ENCODE measurements at regions of chr7 and their contacts with region 1.

Region 1: DNA sequence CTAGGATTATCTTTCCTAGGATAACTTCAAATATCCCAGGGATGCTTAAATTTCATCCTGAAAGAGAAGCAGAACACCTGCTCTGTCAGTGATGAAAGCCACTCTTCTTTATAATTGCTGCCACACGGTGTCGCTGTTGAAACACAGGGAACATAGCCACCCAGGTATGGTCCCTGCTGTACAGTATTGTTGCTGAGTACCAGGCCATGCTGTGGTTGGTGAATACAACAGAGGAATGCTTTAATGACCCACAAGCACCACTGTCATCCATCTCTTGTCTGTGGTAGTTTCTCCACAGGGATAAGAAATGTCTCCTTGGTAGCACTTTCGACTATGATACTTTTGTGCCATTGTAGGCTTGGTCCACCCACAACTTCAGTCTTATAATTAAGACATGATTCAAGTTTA is 70.6 kb upstream of the STARD3NL start:
- DNase-seq: peak; percentile 74
- ATAC-seq: peak; percentile 81

Region 2: DNA sequence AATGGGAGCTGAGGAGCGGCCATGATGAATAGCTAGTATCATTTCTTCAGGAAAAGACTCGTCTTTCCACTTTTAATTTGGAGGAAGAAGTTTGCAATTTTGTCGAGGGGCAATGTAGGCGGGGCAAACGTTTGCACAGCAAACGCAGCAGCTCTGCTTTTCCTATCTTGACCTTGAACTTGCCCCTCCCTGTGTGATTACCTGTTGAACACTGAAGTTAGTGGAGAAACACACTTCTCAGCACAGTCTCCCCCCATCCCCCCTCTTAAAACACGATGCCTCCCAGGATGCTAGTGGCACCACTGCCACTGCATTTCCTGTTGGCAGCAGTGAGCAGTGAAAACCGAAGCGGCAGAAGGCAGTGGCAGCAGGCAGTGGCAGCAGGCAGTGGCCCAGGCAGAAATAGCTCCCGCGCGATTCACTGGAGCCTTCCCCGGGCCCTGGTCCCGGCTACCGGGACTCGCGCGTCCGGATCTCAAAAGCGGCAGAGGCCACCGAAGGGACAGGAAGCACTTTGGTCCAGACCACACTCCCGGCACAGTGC is 187.1 kb before region 1 on chr7 and contains the start of gene EPDR1:
- intact Hi-C with region 1: loop called (anchors 10 kb)
- DNase-seq: peak; percentile 79
- ATAC-seq: no peak
- total RNA-seq, gene EPDR1: 46.9 TPM

Region 3: DNA sequence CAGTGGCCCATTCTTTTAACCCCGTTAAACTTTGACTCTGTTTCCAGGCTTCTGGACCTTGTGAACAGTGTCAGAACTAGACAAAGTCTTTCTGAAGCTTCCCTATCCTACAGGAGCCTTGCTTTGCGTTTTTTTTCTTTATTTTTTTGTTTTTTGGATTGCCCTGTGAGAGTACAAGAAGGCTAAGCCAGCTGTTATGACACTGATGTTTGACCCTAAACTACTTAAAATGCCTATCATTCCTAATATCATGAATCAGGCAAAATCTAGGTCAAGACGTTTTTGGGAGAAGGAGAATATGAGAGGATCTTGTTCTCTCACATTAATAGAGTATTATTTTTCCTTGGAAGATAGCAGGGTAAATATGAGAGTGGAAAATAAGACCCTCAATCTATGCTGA is 107.2 kb before region 1 on chr7:
- intact Hi-C with region 1: no loop called
- DNase-seq: no peak
- ATAC-seq: peak; percentile 91

Region 4: DNA sequence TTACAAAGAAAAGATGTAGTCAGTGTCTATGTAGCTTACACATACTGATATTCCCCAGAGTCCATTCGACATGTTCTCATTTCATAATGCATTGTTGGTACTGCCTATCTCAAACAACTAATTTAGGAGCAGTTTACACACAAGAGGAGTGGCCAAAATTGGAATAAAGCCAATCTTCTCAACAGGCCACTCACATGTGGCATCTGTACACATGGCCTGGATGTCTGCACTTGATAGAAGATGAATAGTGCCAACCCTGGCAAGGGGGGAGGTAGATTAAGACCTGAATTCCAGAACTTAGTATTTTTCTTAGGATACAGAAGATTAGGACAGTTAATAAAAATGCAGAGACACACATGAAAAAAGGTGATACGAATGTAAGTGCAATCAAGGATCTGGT is 54.7 kb before region 1 on chr7:
- intact Hi-C with region 1: no loop called
- DNase-seq: no peak
- ATAC-seq: no peak

Region 5: DNA sequence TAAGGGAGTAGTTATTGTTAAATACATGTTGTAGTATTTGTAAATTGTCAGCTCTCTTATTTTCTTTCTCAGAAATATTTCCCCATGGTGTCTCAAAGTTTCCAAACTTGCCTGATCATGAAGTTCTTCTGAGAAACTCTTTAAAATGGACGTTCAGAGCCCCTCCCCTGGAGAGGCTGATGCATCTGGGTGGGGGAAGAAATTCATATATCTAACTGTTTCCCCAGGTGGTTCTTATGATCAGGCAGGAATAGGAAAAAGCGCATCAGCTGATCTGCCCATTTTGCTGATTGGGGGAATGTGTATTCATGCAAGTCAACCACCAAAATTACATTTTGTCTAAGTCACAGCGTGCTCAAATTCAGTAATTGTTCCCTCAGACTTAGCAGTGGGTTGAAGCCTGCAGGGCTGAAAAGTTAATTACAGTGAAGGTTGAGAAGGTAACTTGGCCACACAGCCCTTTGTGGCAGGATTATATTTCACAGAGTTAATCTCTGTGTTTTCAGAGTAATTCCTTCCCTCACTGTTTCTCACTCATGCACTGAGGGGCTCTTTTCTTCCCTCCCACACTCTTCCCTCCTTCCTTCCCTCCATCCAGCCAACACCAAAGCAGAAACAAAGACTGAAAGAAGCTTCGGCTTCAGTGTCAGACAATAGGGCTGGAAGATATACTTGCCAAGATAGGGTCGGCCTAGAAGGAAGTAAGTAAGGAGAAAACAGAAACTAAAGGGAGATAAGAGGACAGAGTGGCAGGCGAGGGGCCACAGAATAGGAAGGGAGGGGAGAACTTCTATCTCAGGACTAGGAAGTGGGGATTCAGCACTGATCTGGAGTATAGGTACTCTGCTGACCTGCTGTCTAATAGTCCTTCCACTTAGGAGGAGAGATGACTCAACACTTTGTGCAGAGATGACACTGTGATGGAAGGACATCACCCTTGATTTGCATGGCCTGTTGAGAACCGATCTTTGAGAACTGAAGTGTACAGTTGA is 20.0 kb after region 1 on chr7:
- intact Hi-C with region 1: no loop called
- DNase-seq: no peak
- ATAC-seq: no peak

Region 6: DNA sequence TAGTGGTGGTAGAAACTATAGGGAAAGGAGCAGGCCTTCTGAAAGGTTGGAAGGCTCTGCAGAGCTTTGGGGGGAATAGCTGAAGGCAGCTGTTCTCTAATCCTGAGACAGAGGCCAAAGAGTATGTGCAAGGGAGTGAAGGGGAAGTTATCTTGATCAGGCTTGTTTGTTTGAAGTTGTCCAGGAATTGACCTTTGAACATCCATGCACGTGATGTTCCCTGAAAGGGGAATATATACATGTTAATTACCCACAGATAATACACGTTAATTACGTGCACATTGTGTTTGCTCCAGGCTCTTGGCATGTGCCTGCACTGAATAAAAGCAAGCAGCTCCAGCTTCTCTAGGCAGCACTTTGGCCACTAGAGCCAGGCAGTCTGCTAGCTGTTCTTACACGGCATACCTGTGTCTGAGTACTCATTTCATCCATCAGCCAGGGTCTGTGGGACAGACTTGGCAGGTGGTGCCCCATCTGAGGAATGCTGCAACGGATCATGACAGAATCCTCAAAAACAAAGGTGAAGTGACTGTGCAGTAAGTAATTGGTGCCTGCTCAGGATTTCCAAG is 52.6 kb after region 1 on chr7:
- intact Hi-C with region 1: no loop called
- DNase-seq: no peak
- ATAC-seq: no peak

Region 7: GRCh38 chr7:38222481-38223096 is 115.1 kb after region 1 on chr7:
- intact Hi-C with region 1: loop called (anchors 10 kb)
- DNase-seq: no peak
- ATAC-seq: peak; percentile 87

Measured in sciatic nerve (tissue), 2 donors.